H1 (cell line): ENCODE measurements at regions of chr15 and their contacts with region 1.

Region 1: GRCh38 chr15:67240235-67241131 is 14.0 kb downstream of the AAGAB start:
- DNase-seq: no peak
- H3K4me3 ChIP-seq: no peak overlapping the region
- H3K27ac ChIP-seq: no peak overlapping the region
- H3K4me1 ChIP-seq: peaks cover 0 to 8% (median 3%) of the 10 kb centered on the region in 4 experiments; a peak in 4 of 7 replicates
- H3K27me3 ChIP-seq: no peaks in the 10 kb centered on the region
- CTCF ChIP-seq: peak; percentile 42 to 52 (median 51)
- EP300 ChIP-seq: no peak
- POLR2A ChIP-seq: no peak
- RAD21 ChIP-seq: peak; percentile 58 to 74

Region 2: DNA sequence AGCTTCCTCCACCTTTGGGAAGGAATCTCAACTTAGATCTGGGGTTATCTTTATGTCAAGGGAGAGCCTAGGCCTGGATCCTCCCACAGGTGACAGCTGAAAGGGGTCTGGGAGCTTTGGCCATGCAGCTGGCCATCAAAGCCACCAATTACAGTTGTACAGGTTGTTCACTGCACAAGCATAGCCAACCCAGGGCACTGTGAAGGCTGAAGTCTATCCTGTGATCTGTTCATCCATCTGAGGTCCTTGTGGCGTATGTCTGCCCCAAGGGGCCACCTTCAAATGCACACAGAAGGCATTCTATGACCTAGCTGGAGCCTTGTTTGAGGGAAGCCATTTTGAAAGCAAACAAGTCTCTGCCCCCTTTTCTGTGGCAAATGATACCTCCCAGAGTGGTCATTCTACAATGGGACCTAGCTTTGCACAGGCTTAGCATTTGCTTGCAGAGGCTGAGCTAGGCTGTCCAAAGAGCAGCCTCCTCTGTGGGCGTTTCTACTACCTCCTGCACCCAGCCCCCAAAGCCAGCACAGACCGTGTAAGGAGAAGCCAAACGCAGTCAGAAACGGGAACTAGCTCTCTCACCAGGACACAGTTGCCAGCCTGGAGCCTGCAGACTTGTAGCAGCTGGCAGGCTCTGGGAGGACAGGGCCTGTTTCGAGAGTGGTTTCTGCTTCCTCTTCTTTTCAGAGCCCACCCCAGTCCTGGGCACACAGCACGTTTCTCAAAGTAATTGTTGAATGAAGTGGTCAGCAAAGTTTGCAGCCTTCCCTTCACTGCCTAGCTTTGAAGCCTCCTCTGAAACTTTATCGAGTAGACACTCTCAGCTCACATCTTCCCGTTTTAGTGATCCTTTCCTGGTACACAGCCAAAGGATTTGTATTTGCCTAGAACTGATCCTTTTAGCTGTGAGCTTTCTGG is 332.4 kb before region 1 on chr15:
- CTCF ChIA-PET with region 1: no interaction called
- POLR2A ChIA-PET with region 1: no interaction called
- DNase-seq: no peak
- H3K4me3 ChIP-seq: no peak overlapping the region
- H3K27ac ChIP-seq: no peak overlapping the region
- H3K4me1 ChIP-seq: peaks cover 0 to 3% (median 0%) of the 10 kb centered on the region in 4 experiments; a peak in 1 of 7 replicates
- H3K27me3 ChIP-seq: no peaks in the 10 kb centered on the region
- CTCF ChIP-seq: no peak
- EP300 ChIP-seq: no peak
- POLR2A ChIP-seq: no peak
- RAD21 ChIP-seq: no peak

Region 3: DNA sequence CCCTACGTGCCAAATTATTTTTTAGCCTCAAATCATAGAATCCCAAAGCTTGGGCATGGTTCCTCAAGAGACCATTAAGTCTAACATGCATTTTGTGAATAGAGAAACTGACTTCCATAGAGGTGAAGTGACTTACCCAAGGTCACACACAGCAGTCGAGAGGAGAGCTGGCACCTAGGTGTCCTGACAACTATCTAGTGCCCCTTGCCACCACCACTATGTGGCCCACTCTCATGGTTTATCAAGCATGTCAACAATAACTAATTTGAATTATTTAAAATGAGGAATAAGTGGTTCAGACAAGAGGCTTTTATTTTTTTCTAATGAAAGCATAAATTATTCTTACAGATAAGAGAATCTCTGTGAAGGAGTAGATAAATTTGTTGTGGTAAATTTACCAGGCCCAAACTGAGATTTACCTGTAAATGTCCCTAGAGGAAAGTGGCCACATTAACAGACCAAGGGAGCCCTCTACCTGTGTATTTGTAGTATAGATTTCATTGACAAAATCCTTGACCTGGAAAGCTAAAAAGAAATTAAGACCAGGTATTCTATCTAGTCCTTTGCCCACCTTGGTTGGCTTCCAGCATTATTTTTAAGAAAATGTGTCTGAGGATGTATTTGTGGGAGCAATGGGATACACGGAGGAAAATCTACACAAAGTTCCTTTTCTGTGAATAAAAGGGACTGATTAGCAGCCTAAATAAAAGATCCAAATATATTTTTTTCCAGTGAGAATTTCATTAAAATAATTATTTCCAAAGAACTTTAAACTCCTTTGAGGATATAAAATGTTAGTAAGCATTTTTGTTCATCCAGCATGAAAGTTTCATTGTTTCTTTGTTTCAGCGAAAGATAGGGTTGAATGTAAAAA is 63.2 kb after region 1 on chr15:
- CTCF ChIA-PET with region 1: interaction called, 15 read pairs
- POLR2A ChIA-PET with region 1: no interaction called
- DNase-seq: no peak
- H3K4me3 ChIP-seq: no peak overlapping the region
- H3K27ac ChIP-seq: no peak overlapping the region
- H3K4me1 ChIP-seq: no peaks in the 10 kb centered on the region
- H3K27me3 ChIP-seq: no peaks in the 10 kb centered on the region
- CTCF ChIP-seq: peak in 2 of 3 experiments; percentile 51 to 66; a peak in 3 of 4 replicates
- EP300 ChIP-seq: no peak
- POLR2A ChIP-seq: no peak
- RAD21 ChIP-seq: peak; percentile 88 to 91